ENCODE measurements at regions of chr12 and their contacts with region 1.

Region 1: DNA sequence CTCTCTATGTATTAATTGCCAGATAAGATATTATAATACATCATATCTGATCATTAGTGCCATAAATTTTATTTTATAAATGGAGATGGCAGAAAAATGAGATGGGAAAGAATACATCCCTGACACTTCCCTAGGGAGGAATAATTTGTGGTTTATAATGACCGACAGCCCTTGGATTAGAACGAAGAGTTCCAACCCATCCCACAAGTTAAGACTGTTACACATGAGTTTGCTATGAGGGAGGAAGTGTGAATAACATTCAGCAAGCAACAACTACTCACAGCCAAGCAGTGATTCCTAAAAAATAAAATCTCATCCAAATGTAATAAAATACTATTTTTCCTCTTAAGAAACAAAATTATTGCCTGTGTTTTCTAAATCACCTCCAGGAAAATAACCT is 299.0 kb downstream of the CCDC91 start:
- DNase-seq: peak; percentile 13
- ATAC-seq: no peak
- H3K4me3 ChIP-seq: no peak overlapping the region
- H3K27ac ChIP-seq: no peak overlapping the region
- H3K4me1 ChIP-seq: no peaks in the 10 kb centered on the region
- H3K27me3 ChIP-seq: no peaks in the 10 kb centered on the region
- CTCF ChIP-seq: no peak
- POLR2A ChIP-seq: no peak
- RAD21 ChIP-seq: no peak

Region 2: DNA sequence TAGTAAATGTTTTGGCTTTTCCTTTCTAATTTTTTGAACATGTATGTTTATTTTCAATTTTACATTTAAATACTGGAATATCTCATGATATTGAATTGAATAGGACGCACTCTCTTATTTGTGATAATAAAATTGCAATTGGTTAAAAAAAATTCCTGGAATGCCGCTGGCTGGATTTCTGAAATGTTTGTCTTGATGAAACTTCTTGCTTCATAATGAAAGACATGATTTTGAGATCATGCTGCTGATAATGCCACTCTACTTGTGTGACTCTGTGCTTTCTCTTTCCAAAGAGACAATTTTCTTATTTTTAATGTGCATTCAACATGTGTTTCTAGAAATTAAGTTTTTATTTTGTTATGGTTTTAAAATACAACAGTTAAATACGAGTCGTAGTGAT is 194.1 kb after region 1 on chr12:
- CTCF ChIA-PET with region 1: no interaction called
- POLR2A ChIA-PET with region 1: no interaction called
- dilution Hi-C with region 1: no loop called
- in situ Hi-C with region 1: no loop called
- intact Hi-C with region 1: loop called (anchors 1 kb)
- DNase-seq: no peak
- ATAC-seq: no peak
- H3K4me3 ChIP-seq: no peak overlapping the region
- H3K27ac ChIP-seq: no peak overlapping the region
- H3K4me1 ChIP-seq: no peaks in the 10 kb centered on the region
- H3K27me3 ChIP-seq: no peaks in the 10 kb centered on the region
- CTCF ChIP-seq: no peak
- POLR2A ChIP-seq: no peak
- RAD21 ChIP-seq: no peak

Measured in IMR-90 (cell line).